ENCODE measurements at regions of chr15 and their contacts with region 1.

Region 1: DNA sequence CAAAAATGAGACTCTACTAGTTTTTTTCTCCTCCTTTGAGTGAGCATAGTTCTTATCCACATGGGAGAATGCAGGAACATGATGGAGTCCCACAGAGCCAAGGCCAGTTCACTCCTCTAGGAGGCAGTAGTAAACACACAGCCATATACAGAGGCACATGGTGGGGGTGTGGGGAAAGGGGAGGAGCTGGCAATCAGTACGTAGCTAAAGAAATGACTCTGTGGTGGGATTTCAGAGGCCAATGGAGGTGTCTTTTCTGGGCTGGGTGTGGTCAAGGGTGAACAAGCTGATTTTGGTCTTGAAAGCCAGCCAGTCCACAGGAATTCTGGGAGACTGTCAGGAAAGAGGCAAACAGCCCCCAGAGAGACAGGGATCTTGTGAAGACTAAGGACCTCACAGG is 6.6 kb upstream of the RAB11A start:
- H3K4me3 ChIP-seq: no peak overlapping the region
- H3K27ac ChIP-seq: no peak overlapping the region
- H3K4me1 ChIP-seq: peaks cover 5% of the 10 kb centered on the region; the same call in 1 of the 2 replicates
- CTCF ChIP-seq: no peak; the same call in 1 of the 2 replicates

Region 2: GRCh38 chr15:65841121-65841925 is 21.4 kb before region 1 on chr15:
- CTCF ChIA-PET with region 1: interaction called, 34 read pairs
- POLR2A ChIA-PET with region 1: no interaction called
- H3K4me3 ChIP-seq: no peak overlapping the region; the same call in 1 of the 2 replicates
- H3K27ac ChIP-seq: peak overlapping the region; percentile 27; the same call in 1 of the 2 replicates
- H3K4me1 ChIP-seq: no peaks in the 10 kb centered on the region
- CTCF ChIP-seq: no peak

Measured in HEK293 (cell line).